Activated CD4-positive, alpha-beta T cell treated with anti-CD3 and anti-CD28 coated beads, Interleukin-2, amount 10 ng/mL, durations not matched to agents 24 days and 14 days (primary cell): ENCODE measurements at regions of chrX and their contacts with region 1.

Region 1: DNA sequence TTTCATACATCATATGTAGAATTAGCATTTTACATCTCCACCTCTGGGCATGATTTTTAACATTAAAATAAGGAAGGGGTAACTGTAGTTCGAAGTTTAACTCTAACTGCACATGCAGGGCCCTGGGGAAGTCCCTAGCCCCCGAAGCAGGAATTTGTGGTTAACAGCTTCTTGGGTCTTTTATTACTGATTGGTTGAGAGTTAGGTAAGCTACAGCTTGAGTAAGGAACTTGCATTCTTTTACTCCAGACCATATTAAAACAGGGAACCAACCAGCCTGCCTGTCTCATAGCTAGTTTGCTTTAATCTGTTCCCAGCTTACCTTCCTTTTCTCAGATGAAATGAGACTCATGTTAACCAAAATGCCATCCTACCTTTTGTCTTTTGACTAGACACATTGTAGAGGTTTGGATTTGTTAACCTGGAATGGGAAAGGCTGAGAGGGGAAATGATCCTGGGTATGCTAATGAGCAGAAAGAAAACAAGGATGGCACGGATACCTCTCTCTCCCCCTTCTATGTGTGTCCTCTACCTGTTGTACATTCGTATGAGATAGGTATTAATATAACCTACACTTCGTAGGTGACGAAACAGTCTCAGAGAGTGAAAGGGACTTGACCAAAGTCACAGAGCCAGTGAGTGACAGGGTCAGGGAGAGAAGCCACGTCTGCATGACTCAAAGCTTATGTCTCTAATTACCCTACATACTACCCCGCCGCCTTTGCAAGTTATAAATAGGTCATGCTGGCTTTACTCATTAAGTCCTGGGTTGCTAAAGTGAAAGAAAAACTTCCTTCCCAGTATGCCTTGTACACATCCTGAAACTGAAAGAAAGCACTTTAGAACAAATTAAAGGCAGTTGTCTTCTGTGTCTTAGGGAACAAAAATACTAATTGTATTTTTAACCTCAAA is 119.5 kb upstream of the AFF2 start:
- DNase-seq: peak; percentile 82
- H3K4me3 Mint-ChIP-seq: peak overlapping the region; percentile 78
- H3K27ac Mint-ChIP-seq: peak overlapping the region; percentile 92
- H3K4me1 Mint-ChIP-seq: peaks cover 21% of the 10 kb centered on the region
- H3K27me3 Mint-ChIP-seq: no peaks in the 10 kb centered on the region

Region 2: GRCh38 chrX:147911192-147912022 is 469.5 kb before region 1 on chrX and contains the start of gene FMR1:
- intact Hi-C with region 1: loop called (anchors 10 kb)
- DNase-seq: peak; percentile 98
- H3K4me3 Mint-ChIP-seq: peak within 1 kb of the TSS; percentile 88
- H3K27ac Mint-ChIP-seq: peak within 1 kb of the TSS; percentile 89
- H3K4me1 Mint-ChIP-seq: peaks cover 24% of the 10 kb centered on the region
- H3K27me3 Mint-ChIP-seq: peaks cover 1% of the 10 kb centered on the region
- total RNA-seq, gene FMR1: 36.0 and 37.3 TPM in 2 replicates

Region 3: DNA sequence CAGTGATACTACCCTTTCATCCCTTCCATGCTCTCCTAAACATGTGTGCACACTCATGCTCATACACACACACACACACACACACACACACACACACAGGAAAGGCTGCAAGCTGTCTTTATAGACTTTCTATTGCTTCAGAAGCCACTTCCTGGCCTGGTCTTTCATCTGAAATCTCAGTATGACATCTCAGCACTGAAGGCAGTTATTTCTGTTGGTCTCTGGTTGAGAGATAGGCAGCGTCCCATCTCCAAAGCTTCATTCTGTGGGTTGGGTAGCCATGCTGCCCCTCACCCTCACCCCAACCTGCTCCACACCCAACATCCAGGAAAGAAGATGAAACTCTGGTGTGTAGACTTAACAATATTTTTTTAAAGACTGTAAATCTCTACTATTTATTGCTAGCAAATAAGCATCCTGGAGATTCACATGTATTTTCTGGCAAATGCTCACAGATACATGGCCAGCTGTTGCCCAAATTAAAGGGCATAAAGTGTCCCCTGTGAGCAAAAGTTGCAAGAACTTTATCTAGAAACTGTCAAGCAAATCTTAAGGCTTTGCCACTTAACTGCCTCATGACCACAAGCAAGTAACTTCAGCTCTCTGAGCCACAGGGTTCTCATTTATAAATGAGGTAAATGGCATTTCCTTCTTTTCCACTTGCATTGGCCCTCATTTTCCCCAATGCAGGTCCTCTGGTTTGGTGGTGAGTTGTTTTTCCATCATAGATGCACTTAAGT is 70.3 kb before region 1 on chrX:
- intact Hi-C with region 1: loop called (anchors 2 kb)
- DNase-seq: peak; percentile 86
- H3K4me3 Mint-ChIP-seq: peak overlapping the region; percentile 66
- H3K27ac Mint-ChIP-seq: peak overlapping the region; percentile 82
- H3K4me1 Mint-ChIP-seq: peaks cover 25% of the 10 kb centered on the region
- H3K27me3 Mint-ChIP-seq: no peaks in the 10 kb centered on the region